A549 (cell line): ENCODE measurements at regions of chr15 and their contacts with region 1.

Region 1: DNA sequence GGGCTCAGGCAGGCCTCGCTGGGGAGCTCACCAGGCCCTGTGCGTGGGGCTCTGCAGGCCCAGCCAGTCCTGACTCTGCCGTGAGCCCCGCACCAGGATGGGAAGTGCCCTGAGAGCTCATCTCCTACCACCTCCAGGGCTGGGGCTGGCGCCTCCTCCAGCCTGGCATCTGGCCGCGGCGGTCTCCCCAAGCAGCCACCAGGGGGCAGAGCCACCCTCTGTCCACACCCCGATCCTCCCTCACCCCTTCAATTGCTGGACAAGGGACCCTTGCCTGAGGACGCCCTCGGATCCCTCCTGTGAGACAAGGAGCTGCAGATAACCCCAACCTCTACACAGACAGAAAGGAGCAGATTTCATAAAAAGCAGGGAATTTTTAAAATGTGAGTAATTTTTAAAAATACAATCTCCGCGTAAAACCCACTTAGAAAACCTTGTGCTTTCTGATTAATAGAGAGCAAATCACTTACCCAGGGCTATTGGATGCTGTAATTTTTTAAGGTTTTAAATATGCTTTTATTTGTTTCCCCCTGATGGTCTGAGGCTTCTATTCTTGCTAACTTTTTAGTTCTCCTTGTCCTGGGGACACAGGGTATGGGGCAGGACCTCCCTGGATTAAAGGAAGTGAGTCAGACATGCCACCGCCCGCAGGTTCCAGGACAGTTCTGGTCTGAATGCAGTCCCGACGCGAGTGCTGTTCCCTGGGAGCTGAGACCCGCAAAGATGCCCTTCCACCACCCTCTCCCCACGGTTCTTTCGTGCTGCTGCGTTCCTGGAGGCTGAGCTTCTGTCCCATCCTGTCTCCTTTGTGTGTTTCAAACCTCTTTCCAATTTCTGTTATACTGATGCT is 52.3 kb upstream of the CHRNA7 start:
- DNase-seq: peak; percentile 62 to 69
- ATAC-seq: peak; percentile 82 to 91
- H3K4me3 ChIP-seq: no peak overlapping the region
- H3K27ac ChIP-seq: no peak overlapping the region
- H3K4me1 ChIP-seq: peaks cover 16% of the 10 kb centered on the region; the same call in 2 of the 3 replicates
- CTCF ChIP-seq: peak; percentile 85
- EP300 ChIP-seq: no peak
- POLR2A ChIP-seq: no peak
- RAD21 ChIP-seq: peak; percentile 78 to 85

Region 2: DNA sequence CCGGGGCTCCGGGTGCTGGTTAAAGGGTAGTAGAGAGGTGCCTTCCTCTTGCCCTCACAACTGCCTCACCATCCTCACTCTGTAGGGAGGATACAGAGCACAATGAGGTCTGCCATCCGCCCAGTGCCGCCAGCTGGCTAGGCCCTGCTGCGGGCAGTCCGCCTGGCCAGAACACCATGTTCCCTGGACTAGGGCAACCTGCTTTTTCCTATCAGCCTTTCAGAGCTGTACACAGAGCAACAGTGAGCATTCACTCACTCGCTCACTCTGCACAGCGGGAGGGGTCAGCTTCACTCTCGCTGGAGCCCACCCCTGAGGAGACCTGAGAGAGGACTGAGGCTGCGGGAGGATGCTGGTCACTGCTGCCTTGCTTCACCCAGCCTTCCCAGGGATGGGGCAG is 166.4 kb before region 1 on chr15:
- CTCF ChIA-PET with region 1: no interaction called
- POLR2A ChIA-PET with region 1: no interaction called
- DNase-seq: no peak
- ATAC-seq: no peak
- H3K4me3 ChIP-seq: no peak overlapping the region
- H3K27ac ChIP-seq: no peak overlapping the region
- H3K4me1 ChIP-seq: no peaks in the 10 kb centered on the region
- CTCF ChIP-seq: no peak
- EP300 ChIP-seq: no peak
- POLR2A ChIP-seq: no peak
- RAD21 ChIP-seq: no peak

Region 3: DNA sequence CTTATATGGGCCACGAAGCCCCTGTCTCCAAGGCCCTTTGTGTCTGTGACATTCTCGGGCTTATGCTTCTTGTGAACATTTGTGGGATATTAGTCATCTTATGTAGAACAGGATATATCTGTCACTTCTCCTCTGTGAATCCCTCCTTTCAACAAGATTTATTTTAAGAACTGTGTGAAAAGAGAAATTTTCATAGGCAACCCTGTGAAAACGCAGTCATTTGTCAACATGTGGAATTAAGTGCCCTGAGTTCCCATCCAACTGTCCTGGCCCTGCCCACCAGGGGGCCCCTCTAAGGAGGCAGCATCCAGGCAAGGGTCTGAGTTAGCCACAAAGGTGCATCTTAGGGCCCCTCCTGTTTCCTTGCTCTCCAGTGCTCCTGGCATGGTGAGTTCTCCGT is 24.6 kb before region 1 on chr15:
- CTCF ChIA-PET with region 1: interaction called, 67 read pairs
- POLR2A ChIA-PET with region 1: no interaction called
- DNase-seq: no peak
- ATAC-seq: no peak
- H3K4me3 ChIP-seq: no peak overlapping the region
- H3K27ac ChIP-seq: no peak overlapping the region
- H3K4me1 ChIP-seq: no peaks in the 10 kb centered on the region
- CTCF ChIP-seq: no peak
- EP300 ChIP-seq: no peak
- POLR2A ChIP-seq: no peak
- RAD21 ChIP-seq: no peak

Region 4: GRCh38 chr15:31993062-31993461 is 15.0 kb after region 1 on chr15:
- CTCF ChIA-PET with region 1: interaction called, 19 read pairs
- POLR2A ChIA-PET with region 1: no interaction called
- DNase-seq: no peak
- ATAC-seq: no peak
- H3K4me3 ChIP-seq: no peak overlapping the region
- H3K27ac ChIP-seq: no peak overlapping the region
- H3K4me1 ChIP-seq: no peaks in the 10 kb centered on the region
- CTCF ChIP-seq: no peak
- EP300 ChIP-seq: no peak
- POLR2A ChIP-seq: no peak
- RAD21 ChIP-seq: no peak

Region 5: GRCh38 chr15:32014953-32015352 is 36.9 kb after region 1 on chr15:
- CTCF ChIA-PET with region 1: interaction called, 12 read pairs
- POLR2A ChIA-PET with region 1: no interaction called
- DNase-seq: no peak
- ATAC-seq: no peak
- H3K4me3 ChIP-seq: no peak overlapping the region
- H3K27ac ChIP-seq: no peak overlapping the region
- H3K4me1 ChIP-seq: no peaks in the 10 kb centered on the region
- CTCF ChIP-seq: no peak
- EP300 ChIP-seq: no peak
- POLR2A ChIP-seq: no peak
- RAD21 ChIP-seq: no peak

Region 6: DNA sequence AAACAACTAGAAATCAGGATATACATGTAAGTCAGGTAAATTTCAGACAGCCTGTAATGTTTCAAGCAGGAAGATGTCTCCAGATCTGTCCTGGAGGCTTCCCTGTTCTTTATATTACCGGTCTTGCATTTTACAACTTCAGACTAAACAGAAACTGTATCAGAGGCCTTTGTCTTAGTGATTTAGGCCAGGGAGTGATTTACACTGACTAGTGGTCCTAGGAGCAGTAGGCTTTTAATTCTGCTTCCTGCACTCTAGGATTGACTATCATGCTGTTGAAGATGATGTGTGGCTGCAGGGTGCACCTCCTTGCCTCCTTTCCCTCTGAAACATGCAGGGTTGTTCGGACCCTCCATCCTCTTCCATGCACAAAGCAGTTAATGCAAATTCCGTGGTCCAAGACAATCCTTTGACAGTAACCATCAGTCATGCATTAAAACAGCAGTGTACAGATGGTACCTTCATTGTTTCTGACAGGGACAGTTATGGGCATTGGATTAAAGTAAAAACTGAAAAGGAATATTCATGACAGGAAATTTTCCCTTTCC is 79.9 kb after region 1 on chr15:
- CTCF ChIA-PET with region 1: interaction called, 11 read pairs
- POLR2A ChIA-PET with region 1: no interaction called
- DNase-seq: no peak
- ATAC-seq: no peak
- H3K4me3 ChIP-seq: no peak overlapping the region
- H3K27ac ChIP-seq: no peak overlapping the region
- H3K4me1 ChIP-seq: no peaks in the 10 kb centered on the region
- CTCF ChIP-seq: no peak
- EP300 ChIP-seq: no peak
- POLR2A ChIP-seq: no peak
- RAD21 ChIP-seq: no peak